Stomach (tissue), 19 donors: ENCODE measurements at regions of chr15 and their contacts with region 1.

Region 1: DNA sequence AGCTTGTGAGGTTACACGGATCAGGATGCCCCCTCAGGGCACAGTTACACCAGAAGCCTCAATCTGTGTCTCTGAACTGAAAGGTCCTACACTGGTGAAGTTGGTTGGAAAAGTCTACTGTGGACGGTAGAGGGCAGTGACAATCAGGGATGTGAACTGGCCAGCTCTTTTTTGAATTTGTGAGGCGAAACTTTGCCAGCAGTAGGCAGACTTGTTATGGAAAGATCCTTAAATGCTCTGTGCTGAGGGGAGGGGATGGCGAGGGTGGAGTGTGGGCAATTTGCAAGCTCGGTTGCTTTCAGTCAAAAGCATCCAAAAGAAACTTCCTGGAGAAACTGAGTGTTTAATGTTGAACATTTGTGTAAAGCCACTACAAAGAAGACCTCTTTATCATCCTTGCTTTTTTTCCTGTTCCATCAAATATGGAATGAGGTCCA is 127.4 kb upstream of the ABHD17C start:
- DNase-seq: peak; percentile 49 to 91
- H3K4me3 ChIP-seq: no peak overlapping the region
- H3K27ac ChIP-seq: no peak overlapping the region
- H3K4me1 ChIP-seq: peaks cover 0 to 8% (median 0%) of the 10 kb centered on the region in 4 donors
- H3K27me3 ChIP-seq: no peaks in the 10 kb centered on the region
- CTCF ChIP-seq: peak in 5 of 7 experiments; percentile 20 to 73 (median 57)
- EP300 ChIP-seq: no peak
- POLR2A ChIP-seq: no peak

Region 2: GRCh38 chr15:80455668-80456442 is 111.9 kb before region 1 on chr15:
- intact Hi-C with region 1: loop called (anchors 10 kb)
- DNase-seq: peak; percentile 56 to 90
- H3K4me3 ChIP-seq: no peak overlapping the region
- H3K27ac ChIP-seq: no peak overlapping the region
- H3K4me1 ChIP-seq: peaks cover under 1 to 9% (median 7%) of the 10 kb centered on the region in 4 donors
- H3K27me3 ChIP-seq: no peaks in the 10 kb centered on the region
- CTCF ChIP-seq: peak in 5 of 7 experiments; percentile 82 to 88 (median 85)
- EP300 ChIP-seq: no peak
- POLR2A ChIP-seq: no peak

Region 3: GRCh38 chr15:80776420-80777045 is 208.8 kb after region 1 on chr15:
- intact Hi-C with region 1: loop called (anchors 5 kb)
- DNase-seq: peak; percentile 83 to 93
- H3K4me3 ChIP-seq: no peak overlapping the region
- H3K27ac ChIP-seq: no peak overlapping the region
- H3K4me1 ChIP-seq: peaks cover 24 to 39% (median 25%) of the 10 kb centered on the region in 4 donors
- H3K27me3 ChIP-seq: peaks cover 0 to 50% (median 27%) of the 10 kb centered on the region in 3 donors
- CTCF ChIP-seq: peak in 5 of 7 experiments; percentile 66 to 83 (median 72)
- EP300 ChIP-seq: no peak
- POLR2A ChIP-seq: no peak

Region 4: DNA sequence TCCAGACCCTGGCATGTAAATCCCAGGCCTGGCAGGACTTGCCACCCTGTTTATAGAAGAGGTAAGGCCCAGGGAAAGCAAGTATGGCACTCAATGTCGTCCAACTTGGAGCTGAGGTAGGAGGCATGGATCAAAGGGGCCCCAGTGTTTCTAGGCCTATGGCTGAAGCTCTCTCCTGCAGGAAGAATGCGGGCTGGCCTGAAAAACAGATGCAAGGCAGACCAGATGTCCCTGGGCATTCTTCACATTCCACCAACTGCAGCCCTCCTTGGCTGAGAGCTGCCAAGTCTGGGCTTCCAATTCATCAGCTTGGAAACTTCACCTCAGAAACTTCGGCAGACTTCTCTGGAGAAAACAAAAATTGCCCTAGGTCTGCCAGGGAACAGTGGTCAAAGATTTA is 399.7 kb after region 1 on chr15:
- intact Hi-C with region 1: loop called (anchors 5 kb)
- DNase-seq: peak in 1 of 2 donors; percentile 43
- H3K4me3 ChIP-seq: no peak overlapping the region
- H3K27ac ChIP-seq: no peak overlapping the region
- H3K4me1 ChIP-seq: peaks cover 0 to 10% (median 3%) of the 10 kb centered on the region in 4 donors
- H3K27me3 ChIP-seq: no peaks in the 10 kb centered on the region
- CTCF ChIP-seq: no peak
- EP300 ChIP-seq: no peak
- POLR2A ChIP-seq: no peak